ENCODE measurements at regions of chr7 and their contacts with region 1.

Region 1: DNA sequence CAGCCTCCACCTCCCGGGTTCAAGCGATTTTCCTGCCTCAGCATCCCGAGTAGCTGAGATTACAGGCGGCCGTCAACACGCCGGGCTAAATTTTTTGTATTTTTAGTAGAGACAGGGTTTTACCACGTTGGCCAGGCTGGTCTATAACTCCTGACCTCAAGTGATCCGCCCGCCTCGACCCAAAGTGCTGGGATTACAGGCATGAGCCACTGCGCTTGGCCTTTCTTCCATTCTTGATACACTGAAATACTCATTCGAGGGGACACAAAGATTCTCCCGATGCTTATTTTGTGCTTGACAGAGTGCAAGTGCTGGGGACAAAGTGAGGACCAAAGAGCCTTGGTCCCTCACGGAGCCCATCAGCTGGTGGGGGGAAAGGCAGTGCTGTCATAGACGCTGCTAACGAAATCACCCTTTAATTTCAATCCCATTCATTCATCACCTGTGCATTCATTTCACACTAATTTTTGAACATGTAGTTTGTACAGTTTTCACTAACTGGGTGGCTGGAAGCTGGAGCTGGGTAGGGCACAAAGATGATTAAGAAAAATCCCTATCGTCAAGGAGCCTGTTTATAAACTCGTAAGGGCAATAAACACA is 621 bp upstream of the FAM133B start:
- DNase-seq: no peak
- ATAC-seq: no peak
- H3K4me3 ChIP-seq: peak overlapping the region in 4 of 5 experiments; percentile 84 to 88 (median 86)
- H3K4me3 Mint-ChIP-seq: peak overlapping the region; percentile 94
- H3K27ac ChIP-seq: no peak overlapping the region
- H3K27ac Mint-ChIP-seq: peak overlapping the region; percentile 11
- H3K4me1 ChIP-seq: peaks cover 22 to 25% of the 10 kb centered on the region in 2 donors
- H3K4me1 Mint-ChIP-seq: peaks cover 41% of the 10 kb centered on the region
- H3K27me3 ChIP-seq: no peaks in the 10 kb centered on the region
- H3K27me3 Mint-ChIP-seq: no peaks in the 10 kb centered on the region
- CTCF ChIP-seq: no peak

Region 2: DNA sequence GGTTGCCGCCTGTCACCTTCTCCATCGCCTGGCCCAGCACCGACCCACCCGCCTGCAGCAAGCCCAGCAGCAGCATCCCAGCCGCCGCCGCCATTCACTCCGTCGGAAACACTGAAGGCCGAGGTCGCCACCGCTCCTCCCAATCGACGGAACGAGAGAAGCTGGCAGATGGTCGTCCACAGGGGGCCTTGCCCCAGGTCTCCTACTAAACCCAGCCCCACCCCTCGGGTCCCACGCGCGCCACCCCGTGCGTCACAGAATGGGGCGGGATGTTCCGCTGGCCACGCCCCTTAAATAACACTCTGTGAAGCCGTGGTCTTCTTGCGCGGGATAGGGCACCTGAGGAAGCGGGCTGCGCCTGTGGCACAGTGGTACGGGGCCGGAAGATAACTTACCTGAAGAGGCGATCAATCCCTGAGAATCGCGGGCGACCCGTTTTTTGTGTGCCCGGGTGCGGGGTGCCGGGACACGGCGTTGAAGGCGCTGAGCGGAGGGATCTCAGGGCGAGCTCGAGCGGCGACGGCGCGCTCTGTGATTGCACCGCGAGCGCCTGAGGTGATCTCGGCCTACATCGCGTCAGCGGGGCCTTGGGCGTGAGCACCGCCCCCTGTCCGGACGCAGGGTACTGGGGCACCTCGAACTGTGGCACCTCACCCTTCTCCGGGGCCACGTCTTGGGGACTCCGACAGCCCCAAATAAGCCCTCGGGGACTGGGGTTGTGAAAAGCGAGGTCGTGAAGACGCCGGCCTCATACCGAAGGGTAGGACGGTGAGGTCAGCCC is 456.4 kb before region 1 on chr7 and contains the start of gene CYP51A1:
- CTCF ChIA-PET with region 1: no interaction called
- POLR2A ChIA-PET with region 1: no interaction called
- intact Hi-C with region 1: loop called (anchors 1 kb)
- DNase-seq: peak; percentile 99
- ATAC-seq: peak; percentile 84
- H3K4me3 ChIP-seq: peak within 1 kb of the TSS; percentile 86 to 94 (median 90)
- H3K4me3 Mint-ChIP-seq: peak within 1 kb of the TSS; percentile 99
- H3K27ac ChIP-seq: peak within 1 kb of the TSS; percentile 94 to 98
- H3K27ac Mint-ChIP-seq: peak within 1 kb of the TSS; percentile 100
- H3K4me1 ChIP-seq: peaks cover 18 to 27% of the 10 kb centered on the region in 2 donors
- H3K4me1 Mint-ChIP-seq: peaks cover 39% of the 10 kb centered on the region
- H3K27me3 ChIP-seq: no peaks in the 10 kb centered on the region
- H3K27me3 Mint-ChIP-seq: no peaks in the 10 kb centered on the region
- CTCF ChIP-seq: no peak
- total RNA-seq, gene CYP51A1: 36.1 and 37.9 TPM in 2 replicates

Region 3: GRCh38 chr7:92245487-92246362 is 345.1 kb before region 1 on chr7 and contains the starts of genes ANKIB1 and KRIT1:
- CTCF ChIA-PET with region 1: no interaction called
- POLR2A ChIA-PET with region 1: no interaction called
- intact Hi-C with region 1: loop called (anchors 2 kb)
- DNase-seq: peak; percentile 92
- ATAC-seq: peak; percentile 78
- H3K4me3 ChIP-seq: peak within 1 kb of the TSS; percentile 55 to 83 (median 81)
- H3K4me3 Mint-ChIP-seq: peak within 1 kb of the TSS; percentile 99
- H3K27ac ChIP-seq: peak within 1 kb of the TSS; percentile 84 to 97
- H3K27ac Mint-ChIP-seq: peak within 1 kb of the TSS; percentile 99
- H3K4me1 ChIP-seq: peaks cover 15 to 31% of the 10 kb centered on the region in 2 donors
- H3K4me1 Mint-ChIP-seq: peaks cover 39% of the 10 kb centered on the region
- H3K27me3 ChIP-seq: no peaks in the 10 kb centered on the region
- H3K27me3 Mint-ChIP-seq: no peaks in the 10 kb centered on the region
- CTCF ChIP-seq: peak; percentile 20
- total RNA-seq, gene ANKIB1: 76.7 and 77.5 TPM in 2 replicates
- total RNA-seq, gene KRIT1: 78.1 and 85.1 TPM in 2 replicates

Region 4: GRCh38 chr7:92528188-92528957 is 62.4 kb before region 1 on chr7 and contains the starts of genes PEX1 and RBM48:
- CTCF ChIA-PET with region 1: interaction called, 7 read pairs
- POLR2A ChIA-PET with region 1: interaction called, 5 read pairs
- intact Hi-C with region 1: loop called (anchors 1 kb)
- DNase-seq: peak; percentile 98
- ATAC-seq: peak; percentile 91
- H3K4me3 ChIP-seq: peak within 1 kb of the TSS; percentile 81 to 99 (median 95)
- H3K4me3 Mint-ChIP-seq: peak within 1 kb of the TSS; percentile 88
- H3K27ac ChIP-seq: peak within 1 kb of the TSS; percentile 89 to 96
- H3K27ac Mint-ChIP-seq: peak within 1 kb of the TSS; percentile 95
- H3K4me1 ChIP-seq: peaks cover 14 to 19% of the 10 kb centered on the region in 2 donors
- H3K4me1 Mint-ChIP-seq: peaks cover 26% of the 10 kb centered on the region
- H3K27me3 ChIP-seq: no peaks in the 10 kb centered on the region
- H3K27me3 Mint-ChIP-seq: no peaks in the 10 kb centered on the region
- CTCF ChIP-seq: peak; percentile 31
- total RNA-seq, gene PEX1: 33.7 and 34.8 TPM in 2 replicates
- total RNA-seq, gene RBM48: 32.9 and 36.8 TPM in 2 replicates

Region 5: GRCh38 chr7:92609921-92610518 is 19.2 kb after region 1 on chr7:
- CTCF ChIA-PET with region 1: interaction called, 3 read pairs
- POLR2A ChIA-PET with region 1: no interaction called
- intact Hi-C with region 1: loop called (anchors 2 kb)
- DNase-seq: peak; percentile 25
- ATAC-seq: no peak
- H3K4me3 ChIP-seq: no peak overlapping the region
- H3K4me3 Mint-ChIP-seq: no peak overlapping the region
- H3K27ac ChIP-seq: no peak overlapping the region
- H3K27ac Mint-ChIP-seq: no peak overlapping the region
- H3K4me1 ChIP-seq: no peaks in the 10 kb centered on the region
- H3K4me1 Mint-ChIP-seq: no peaks in the 10 kb centered on the region
- H3K27me3 ChIP-seq: no peaks in the 10 kb centered on the region
- H3K27me3 Mint-ChIP-seq: no peaks in the 10 kb centered on the region
- CTCF ChIP-seq: peak; percentile 61

Measured in B cell (primary cell).